ENCODE measurements at regions of chr16 and their contacts with region 1.

Region 1: GRCh38 chr16:10521681-10522274 is 58.6 kb downstream of the EMP2 start:
- DNase-seq: peak; percentile 6
- H3K4me3 ChIP-seq: no peak overlapping the region
- H3K27ac ChIP-seq: no peak overlapping the region
- H3K27me3 ChIP-seq: no peaks in the 10 kb centered on the region
- CTCF ChIP-seq: peak; percentile 80

Region 2: DNA sequence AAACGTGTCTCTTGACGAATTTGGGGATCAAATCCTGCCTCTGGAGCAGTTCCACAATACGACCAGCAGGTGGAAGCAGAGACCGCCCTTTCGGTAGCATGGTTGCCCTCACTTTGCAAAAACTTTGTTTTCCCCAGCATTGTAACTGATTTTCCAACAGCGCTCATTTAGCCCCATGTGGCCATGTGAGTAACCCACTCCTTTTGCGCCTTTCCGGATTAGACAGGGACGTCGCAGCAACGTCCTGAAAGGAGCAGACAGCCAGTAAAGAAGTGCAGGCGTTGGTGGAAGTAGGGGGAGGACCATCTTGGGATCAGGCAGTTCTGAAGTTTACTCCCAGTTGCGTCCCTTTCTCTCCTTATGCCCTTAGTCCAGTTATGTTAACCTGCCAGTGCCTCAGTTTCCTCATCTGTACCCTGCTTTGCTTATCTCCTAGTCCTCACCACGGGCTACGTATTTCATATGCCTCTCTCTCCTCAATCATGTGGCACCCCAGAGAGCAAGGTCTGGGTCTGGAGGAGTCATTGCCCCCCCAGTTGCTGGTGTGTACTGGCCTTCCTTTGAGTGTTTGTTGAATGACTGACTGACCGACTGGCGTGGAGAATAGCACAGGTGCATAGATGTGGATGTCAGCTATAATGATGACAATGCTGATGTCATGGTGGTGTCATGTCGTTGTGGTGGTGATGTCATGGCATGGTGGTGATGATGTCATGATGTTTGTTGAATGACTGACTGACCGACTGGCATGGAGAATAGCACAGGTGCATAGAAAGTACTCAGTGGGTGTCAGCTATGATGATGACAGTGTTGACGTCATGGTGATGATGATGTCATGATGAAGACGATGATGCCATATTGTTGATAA is 1953.8 kb before region 1 on chr16:
- CTCF ChIA-PET with region 1: interaction called, 13 read pairs
- POLR2A ChIA-PET with region 1: no interaction called
- DNase-seq: peak; percentile 74
- H3K4me3 ChIP-seq: no peak overlapping the region
- H3K27ac ChIP-seq: peak overlapping the region; percentile 21
- H3K27me3 ChIP-seq: no peaks in the 10 kb centered on the region
- CTCF ChIP-seq: peak; percentile 99

Region 3: GRCh38 chr16:10737068-10737625 is 215.4 kb after region 1 on chr16:
- CTCF ChIA-PET with region 1: interaction called, 204 read pairs
- POLR2A ChIA-PET with region 1: no interaction called
- DNase-seq: peak; percentile 38
- H3K4me3 ChIP-seq: no peak overlapping the region
- H3K27ac ChIP-seq: no peak overlapping the region
- H3K27me3 ChIP-seq: no peaks in the 10 kb centered on the region
- CTCF ChIP-seq: peak; percentile 95